PC-3 (cell line): ENCODE measurements at regions of chr13 and their contacts with region 1.

Region 1: GRCh38 chr13:80342471-80343380 is 1.8 kb upstream of the SPRY2 start:
- DNase-seq: peak; percentile 82
- ATAC-seq: peak; percentile 40
- H3K4me3 ChIP-seq: peak overlapping the region; percentile 99
- H3K27ac ChIP-seq: peak overlapping the region; percentile 52
- H3K4me1 ChIP-seq: peaks cover 7% of the 10 kb centered on the region
- H3K27me3 ChIP-seq: no peaks in the 10 kb centered on the region
- CTCF ChIP-seq: peak; percentile 73

Region 2: GRCh38 chr13:79679334-79679733 is 663.4 kb before region 1 on chr13:
- CTCF ChIA-PET with region 1: no interaction called
- POLR2A ChIA-PET with region 1: no interaction called
- intact Hi-C with region 1: loop called (anchors 2 kb)
- DNase-seq: peak; percentile 76
- ATAC-seq: peak; percentile 66
- H3K4me3 ChIP-seq: no peak overlapping the region
- H3K27ac ChIP-seq: no peak overlapping the region
- H3K4me1 ChIP-seq: peaks cover 11% of the 10 kb centered on the region; the same call in 1 of the 2 replicates
- H3K27me3 ChIP-seq: no peaks in the 10 kb centered on the region
- CTCF ChIP-seq: peak; percentile 86

Region 3: DNA sequence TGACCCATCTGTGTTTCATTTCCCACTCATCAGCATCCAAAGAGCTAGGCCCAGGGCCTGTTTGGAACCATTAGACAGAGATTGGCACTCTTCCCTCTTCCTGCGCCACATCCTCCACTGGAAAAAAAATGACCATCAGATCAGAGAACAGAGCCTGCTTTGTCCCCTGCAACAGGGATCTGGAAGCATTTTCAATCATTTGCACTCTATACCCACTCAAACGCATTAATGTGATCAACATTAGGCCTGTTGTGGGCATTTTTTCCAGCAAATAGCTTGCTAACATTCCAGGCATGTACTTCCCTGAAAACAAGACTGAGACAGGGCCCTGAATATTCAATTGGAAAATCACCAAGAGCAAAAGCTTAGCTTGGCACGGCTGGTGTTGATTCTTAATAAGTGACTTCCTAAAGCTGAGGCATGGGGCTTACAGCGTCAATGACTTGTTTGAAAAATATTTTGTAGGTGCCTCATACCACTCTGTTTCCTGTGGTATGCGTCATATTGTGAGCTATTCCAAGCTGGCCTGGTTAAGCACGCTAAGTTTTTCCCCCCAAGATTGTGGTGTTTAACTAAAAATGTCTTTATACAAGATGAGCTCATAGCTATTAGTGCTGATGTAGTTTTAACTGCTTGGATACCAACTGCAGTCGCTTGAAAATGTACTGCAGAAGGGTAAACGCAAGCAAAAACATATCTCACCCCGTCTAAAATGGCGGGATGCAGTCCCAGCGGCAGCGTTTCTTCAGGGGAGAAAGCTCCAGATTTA is 406.2 kb before region 1 on chr13:
- CTCF ChIA-PET with region 1: interaction called, 8 read pairs
- POLR2A ChIA-PET with region 1: interaction called, 11 read pairs
- intact Hi-C with region 1: loop called (anchors 5 kb)
- DNase-seq: peak; percentile 95
- ATAC-seq: peak; percentile 95
- H3K4me3 ChIP-seq: no peak overlapping the region
- H3K27ac ChIP-seq: peak overlapping the region; percentile 97
- H3K4me1 ChIP-seq: peaks cover 44% of the 10 kb centered on the region
- H3K27me3 ChIP-seq: no peaks in the 10 kb centered on the region
- CTCF ChIP-seq: no peak

Region 4: GRCh38 chr13:80040196-80040980 is 302.3 kb before region 1 on chr13:
- CTCF ChIA-PET with region 1: no interaction called
- POLR2A ChIA-PET with region 1: no interaction called
- intact Hi-C with region 1: loop called (anchors 1 kb)
- DNase-seq: peak; percentile 95
- ATAC-seq: peak; percentile 87
- H3K4me3 ChIP-seq: no peak overlapping the region
- H3K27ac ChIP-seq: peak overlapping the region; percentile 91
- H3K4me1 ChIP-seq: peaks cover 50% of the 10 kb centered on the region
- H3K27me3 ChIP-seq: no peaks in the 10 kb centered on the region
- CTCF ChIP-seq: no peak

Region 5: GRCh38 chr13:80132741-80133601 is 209.8 kb before region 1 on chr13:
- CTCF ChIA-PET with region 1: no interaction called
- POLR2A ChIA-PET with region 1: interaction called, 8 read pairs
- intact Hi-C with region 1: loop called (anchors 2 kb)
- DNase-seq: peak; percentile 45
- ATAC-seq: peak; percentile 84
- H3K4me3 ChIP-seq: peak overlapping the region; percentile 62
- H3K27ac ChIP-seq: peak overlapping the region; percentile 45
- H3K4me1 ChIP-seq: peaks cover 27% of the 10 kb centered on the region
- H3K27me3 ChIP-seq: no peaks in the 10 kb centered on the region
- CTCF ChIP-seq: no peak

Region 6: GRCh38 chr13:80604098-80604497 is 261.4 kb after region 1 on chr13:
- CTCF ChIA-PET with region 1: no interaction called
- POLR2A ChIA-PET with region 1: no interaction called
- intact Hi-C with region 1: no loop called
- DNase-seq: peak; percentile 4
- ATAC-seq: peak; percentile 49
- H3K4me3 ChIP-seq: no peak overlapping the region
- H3K27ac ChIP-seq: no peak overlapping the region
- H3K4me1 ChIP-seq: peaks cover 9% of the 10 kb centered on the region; the same call in 1 of the 2 replicates
- H3K27me3 ChIP-seq: no peaks in the 10 kb centered on the region
- CTCF ChIP-seq: no peak

Region 7: DNA sequence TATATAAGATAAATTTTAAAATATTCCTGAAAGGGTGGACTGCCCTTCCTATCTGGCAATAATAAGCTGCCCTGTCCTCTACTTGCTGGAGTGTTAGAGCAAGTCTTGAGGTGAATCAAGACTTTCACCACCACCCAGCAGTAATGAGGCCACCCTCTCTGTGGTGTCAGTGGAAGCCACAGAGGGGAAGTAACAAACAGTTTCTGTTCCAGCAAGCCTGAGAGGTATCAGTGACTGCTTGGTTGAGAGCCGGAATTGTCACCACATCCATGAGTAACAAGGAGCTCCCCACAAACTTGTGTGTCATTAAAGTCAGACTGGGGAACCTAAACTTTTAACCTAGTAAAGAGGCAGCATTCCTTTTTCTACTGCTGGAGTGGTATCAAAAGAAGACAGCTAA is 530.9 kb after region 1 on chr13:
- CTCF ChIA-PET with region 1: no interaction called
- POLR2A ChIA-PET with region 1: no interaction called
- intact Hi-C with region 1: loop called (anchors 5 kb)
- DNase-seq: peak; percentile 7
- ATAC-seq: no peak
- H3K4me3 ChIP-seq: no peak overlapping the region
- H3K27ac ChIP-seq: no peak overlapping the region
- H3K4me1 ChIP-seq: peaks cover 3% of the 10 kb centered on the region; the same call in 1 of the 2 replicates
- H3K27me3 ChIP-seq: no peaks in the 10 kb centered on the region
- CTCF ChIP-seq: no peak

Region 8: DNA sequence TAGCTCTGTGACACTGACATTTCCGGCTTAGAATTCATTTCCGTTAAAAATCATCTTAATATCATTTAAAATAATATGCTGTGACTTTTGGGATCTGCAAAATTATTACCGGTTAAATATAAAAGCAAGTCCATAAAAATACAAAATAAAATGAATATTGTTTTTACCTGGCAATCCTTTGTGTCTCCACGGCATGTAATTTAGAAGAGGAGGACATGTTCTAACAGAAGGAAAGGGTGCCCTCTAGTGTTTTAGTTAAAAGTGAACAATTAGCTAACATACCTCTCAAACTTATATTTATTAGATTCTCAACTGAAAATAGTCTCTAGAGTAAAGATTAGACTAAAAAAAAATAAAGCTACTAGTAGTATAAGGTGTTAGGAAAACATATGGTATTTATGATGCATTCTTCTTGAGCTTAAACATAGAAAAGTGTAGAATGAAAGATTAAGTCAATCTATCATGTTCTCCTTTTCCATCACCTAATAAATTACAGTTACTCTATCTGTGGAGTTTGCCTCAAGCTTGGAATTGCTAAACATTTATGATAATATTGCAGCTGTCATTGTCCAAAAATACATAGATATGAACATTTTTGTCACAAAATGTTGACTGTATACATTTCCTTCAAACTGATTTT is 674.9 kb after region 1 on chr13:
- CTCF ChIA-PET with region 1: interaction called, 3 read pairs
- POLR2A ChIA-PET with region 1: no interaction called
- intact Hi-C with region 1: loop called (anchors 1 kb)
- DNase-seq: peak; percentile 61
- ATAC-seq: peak; percentile 55
- H3K4me3 ChIP-seq: no peak overlapping the region
- H3K27ac ChIP-seq: no peak overlapping the region
- H3K4me1 ChIP-seq: no peaks in the 10 kb centered on the region
- H3K27me3 ChIP-seq: no peaks in the 10 kb centered on the region
- CTCF ChIP-seq: peak; percentile 67